SK-N-SH (cell line): ENCODE measurements at regions of chr1 and their contacts with region 1.

Region 1: GRCh38 chr1:202716654-202717053 is 6.4 kb upstream of the SYT2 start:
- DNase-seq: no peak
- H3K4me3 ChIP-seq: no peak overlapping the region
- H3K27ac ChIP-seq: no peak overlapping the region
- H3K4me1 ChIP-seq: peaks cover 0 to 15% of the 10 kb centered on the region in 2 experiments; a peak in 1 of 4 replicates
- H3K27me3 ChIP-seq: no peaks in the 10 kb centered on the region
- CTCF ChIP-seq: no peak
- EP300 ChIP-seq: no peak
- RAD21 ChIP-seq: no peak

Region 2: GRCh38 chr1:201970334-201971159 is 746.1 kb before region 1 on chr1:
- CTCF ChIA-PET with region 1: no interaction called
- POLR2A ChIA-PET with region 1: no interaction called
- DNase-seq: peak; percentile 62
- H3K4me3 ChIP-seq: no peak overlapping the region
- H3K27ac ChIP-seq: no peak overlapping the region
- H3K4me1 ChIP-seq: no peaks in the 10 kb centered on the region; a peak in 1 of 4 replicates
- H3K27me3 ChIP-seq: no peaks in the 10 kb centered on the region
- CTCF ChIP-seq: no peak
- EP300 ChIP-seq: peak in 1 of 2 experiments; percentile 84; a peak in 2 of 4 replicates
- RAD21 ChIP-seq: no peak

Region 3: DNA sequence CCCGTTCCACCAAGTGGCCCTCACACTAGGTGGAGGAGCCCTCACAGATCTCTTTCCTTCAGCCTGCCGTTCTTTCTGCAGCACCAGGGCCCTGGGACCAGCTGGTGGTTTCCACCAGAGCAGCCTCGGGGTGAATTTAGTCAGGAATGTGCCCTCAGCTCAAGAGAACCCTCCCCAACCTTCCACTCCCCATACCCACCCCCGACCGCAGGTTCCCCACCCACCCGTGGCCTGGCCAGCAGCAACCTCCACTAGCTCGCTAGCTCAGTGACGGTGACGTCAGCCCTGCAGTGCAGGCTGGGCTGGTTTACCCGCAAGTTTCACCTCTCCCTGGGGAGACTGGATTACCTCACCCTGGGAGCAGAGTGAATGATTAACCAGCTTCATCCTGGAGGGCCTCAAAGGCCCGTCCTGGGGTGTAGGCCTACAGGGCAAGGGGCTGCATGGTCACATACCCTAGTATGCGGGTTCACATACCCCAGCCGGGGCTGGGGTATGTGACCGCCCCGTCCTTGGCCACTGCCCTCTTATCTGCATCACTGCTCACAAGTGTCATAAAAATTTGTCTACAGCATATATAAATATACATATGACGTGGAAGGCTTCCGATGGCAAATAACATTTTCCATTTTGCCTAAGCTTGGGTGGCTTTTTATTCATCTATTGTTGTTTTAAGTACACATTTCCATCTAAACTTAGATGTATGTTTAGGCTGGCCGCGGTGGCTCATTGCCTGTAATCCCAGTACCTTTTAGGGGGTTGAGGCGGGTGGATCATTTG is 681.8 kb before region 1 on chr1:
- CTCF ChIA-PET with region 1: no interaction called
- POLR2A ChIA-PET with region 1: no interaction called
- DNase-seq: no peak
- H3K4me3 ChIP-seq: no peak overlapping the region
- H3K27ac ChIP-seq: no peak overlapping the region
- H3K4me1 ChIP-seq: no peaks in the 10 kb centered on the region
- H3K27me3 ChIP-seq: no peaks in the 10 kb centered on the region
- CTCF ChIP-seq: no peak
- EP300 ChIP-seq: no peak
- RAD21 ChIP-seq: no peak

Region 4: DNA sequence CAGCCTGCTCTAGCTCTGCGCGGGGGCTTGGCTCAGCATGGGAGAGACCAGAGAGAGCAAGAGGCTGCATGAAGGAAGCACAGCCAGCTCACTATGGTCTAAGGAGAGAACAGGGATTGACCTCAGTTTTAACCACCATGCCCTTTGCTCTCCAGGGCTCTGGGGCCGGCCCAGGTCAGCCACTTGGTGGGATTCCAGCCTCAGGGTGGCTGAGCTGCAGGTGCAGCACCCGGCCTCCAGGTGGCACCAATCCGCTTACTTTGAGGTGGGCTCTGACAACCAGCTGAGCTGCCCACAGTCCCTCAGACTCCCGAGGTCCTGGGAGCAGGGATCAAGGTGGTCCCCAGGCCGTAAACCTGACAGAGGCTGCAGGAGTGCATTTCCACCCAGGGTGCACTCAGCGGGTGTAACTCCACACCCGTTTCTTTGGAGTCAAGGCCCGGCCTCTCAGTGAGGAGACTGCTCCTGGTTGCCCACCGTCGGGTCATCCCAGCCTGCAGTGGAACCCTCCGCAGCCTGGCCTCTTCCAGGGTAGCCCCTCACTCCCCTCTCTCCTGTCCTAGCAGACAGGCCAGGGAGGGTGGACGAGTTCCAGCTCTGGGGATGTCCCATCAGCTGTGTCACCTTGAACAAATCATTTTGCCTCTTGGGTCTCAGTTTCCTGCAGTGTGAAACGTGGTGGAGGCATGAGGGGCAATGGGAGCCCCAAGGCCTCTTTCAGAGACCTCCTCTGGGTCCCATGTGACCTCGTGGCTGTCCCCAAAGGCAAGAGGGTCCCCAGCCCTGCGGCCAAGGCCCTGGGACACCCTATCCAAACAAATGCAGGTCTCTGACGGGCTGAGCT is 523.7 kb before region 1 on chr1:
- CTCF ChIA-PET with region 1: interaction called, 22 read pairs
- POLR2A ChIA-PET with region 1: no interaction called
- DNase-seq: peak; percentile 89
- H3K4me3 ChIP-seq: no peak overlapping the region
- H3K27ac ChIP-seq: no peak overlapping the region
- H3K4me1 ChIP-seq: peaks cover 0 to 10% of the 10 kb centered on the region in 2 experiments; a peak in 1 of 4 replicates
- H3K27me3 ChIP-seq: peaks cover 28% of the 10 kb centered on the region
- CTCF ChIP-seq: peak; percentile 83
- EP300 ChIP-seq: no peak
- RAD21 ChIP-seq: peak; percentile 84

Region 5: GRCh38 chr1:202501281-202501680 is 215.4 kb before region 1 on chr1:
- CTCF ChIA-PET with region 1: interaction called, 30 read pairs
- POLR2A ChIA-PET with region 1: no interaction called
- DNase-seq: peak; percentile 7
- H3K4me3 ChIP-seq: no peak overlapping the region
- H3K27ac ChIP-seq: no peak overlapping the region
- H3K4me1 ChIP-seq: peaks cover 8 to 16% of the 10 kb centered on the region in 2 experiments
- H3K27me3 ChIP-seq: no peaks in the 10 kb centered on the region
- CTCF ChIP-seq: peak; percentile 63
- EP300 ChIP-seq: no peak
- RAD21 ChIP-seq: peak; percentile 82

Region 6: DNA sequence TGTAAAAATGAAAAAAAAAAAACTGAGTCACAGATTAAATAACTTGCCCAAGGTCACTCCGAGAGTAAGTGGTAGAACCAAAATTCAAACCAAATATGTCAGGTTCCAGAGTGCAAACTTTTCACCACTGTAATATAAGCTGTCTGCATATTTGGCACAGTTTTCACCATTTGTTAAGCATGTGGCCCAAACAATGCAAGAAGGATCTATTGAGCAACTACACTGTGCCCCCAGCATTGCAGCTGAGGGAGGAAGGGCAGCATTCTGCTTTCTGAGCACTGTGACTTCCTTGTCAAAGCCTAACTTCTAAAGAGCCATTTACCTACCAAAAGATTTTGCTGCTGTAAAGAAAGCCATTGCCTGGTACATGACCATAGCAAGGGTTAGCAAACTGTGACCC is 139.8 kb before region 1 on chr1:
- CTCF ChIA-PET with region 1: interaction called, 12 read pairs
- POLR2A ChIA-PET with region 1: no interaction called
- DNase-seq: no peak
- H3K4me3 ChIP-seq: no peak overlapping the region
- H3K27ac ChIP-seq: peak overlapping the region; percentile 72 to 96
- H3K4me1 ChIP-seq: peaks cover 52 to 77% of the 10 kb centered on the region in 2 experiments
- H3K27me3 ChIP-seq: no peaks in the 10 kb centered on the region
- CTCF ChIP-seq: no peak
- EP300 ChIP-seq: no peak
- RAD21 ChIP-seq: no peak

Region 7: GRCh38 chr1:202656951-202657646 is 59.6 kb before region 1 on chr1:
- CTCF ChIA-PET with region 1: interaction called, 38 read pairs
- POLR2A ChIA-PET with region 1: no interaction called
- DNase-seq: no peak
- H3K4me3 ChIP-seq: no peak overlapping the region
- H3K27ac ChIP-seq: no peak overlapping the region
- H3K4me1 ChIP-seq: peaks cover 0 to 4% of the 10 kb centered on the region in 2 experiments; a peak in 1 of 4 replicates
- H3K27me3 ChIP-seq: no peaks in the 10 kb centered on the region; the same call in none of the 2 replicates
- CTCF ChIP-seq: peak; percentile 30; the same call in 1 of the 2 replicates
- EP300 ChIP-seq: no peak
- RAD21 ChIP-seq: no peak

Region 8: DNA sequence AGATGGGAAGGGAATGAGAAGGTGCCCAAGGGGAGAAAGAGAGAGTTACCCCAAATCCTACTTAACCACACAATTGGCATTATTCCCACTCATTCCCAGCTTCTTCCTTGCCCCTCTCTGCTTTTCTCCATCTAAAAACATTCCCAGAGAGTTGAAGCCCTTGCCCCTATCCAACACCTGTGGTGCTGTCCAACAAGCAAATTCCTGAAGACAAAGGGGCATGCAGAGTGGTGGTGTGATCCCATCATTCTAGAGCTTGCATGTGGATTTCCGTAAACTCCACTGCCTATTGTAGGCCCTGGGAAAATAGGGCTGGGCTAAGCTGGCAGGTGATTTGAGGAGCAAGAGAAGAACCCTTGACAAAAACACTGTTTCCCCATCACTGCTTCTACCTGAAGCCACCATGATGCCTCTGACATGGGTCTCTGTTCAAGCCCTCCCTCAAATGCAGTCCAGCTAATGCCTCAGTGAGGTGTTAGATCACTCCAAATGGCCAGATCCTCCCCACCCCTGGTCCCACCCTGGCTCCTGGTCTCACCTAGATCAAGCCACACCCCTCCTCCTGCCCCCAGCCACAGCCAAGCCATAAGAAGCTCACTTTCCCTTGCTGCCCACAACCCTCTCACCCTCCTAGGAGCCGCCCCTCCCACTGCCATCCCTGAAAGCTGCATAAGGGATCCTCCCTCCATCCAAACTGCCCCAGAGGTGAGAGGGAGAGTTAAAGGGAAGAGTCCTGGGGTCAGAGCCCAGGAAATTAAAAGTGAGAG is 35.9 kb before region 1 on chr1:
- CTCF ChIA-PET with region 1: interaction called, 10 read pairs
- POLR2A ChIA-PET with region 1: no interaction called
- DNase-seq: no peak
- H3K4me3 ChIP-seq: no peak overlapping the region
- H3K27ac ChIP-seq: no peak overlapping the region
- H3K4me1 ChIP-seq: peaks cover 0 to 4% of the 10 kb centered on the region in 2 experiments; a peak in 1 of 4 replicates
- H3K27me3 ChIP-seq: peaks cover 25% of the 10 kb centered on the region; the same call in 1 of the 2 replicates
- CTCF ChIP-seq: no peak
- EP300 ChIP-seq: no peak
- RAD21 ChIP-seq: no peak

Region 9: DNA sequence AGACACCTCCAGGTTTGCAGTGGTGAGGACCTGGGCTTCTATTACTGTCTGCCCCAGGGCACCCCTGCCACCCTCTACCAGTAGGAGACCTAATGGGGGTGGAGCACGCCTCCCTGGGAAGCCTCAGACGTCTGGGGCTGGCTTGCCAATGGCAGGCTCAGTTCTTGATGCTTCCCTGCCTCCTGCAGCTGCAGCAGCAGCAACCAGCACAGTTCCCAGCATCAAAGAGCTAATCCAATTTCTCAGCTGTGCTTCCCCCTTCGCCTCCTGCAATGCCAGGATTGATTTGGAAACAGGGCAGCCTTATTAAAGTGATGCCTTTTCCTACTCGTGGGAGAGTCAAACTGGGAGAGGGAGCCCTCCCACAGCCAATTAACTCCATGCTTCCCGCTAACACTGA is 14.6 kb before region 1 on chr1:
- CTCF ChIA-PET with region 1: interaction called, 41 read pairs
- POLR2A ChIA-PET with region 1: no interaction called
- DNase-seq: peak; percentile 34
- H3K4me3 ChIP-seq: no peak overlapping the region
- H3K27ac ChIP-seq: no peak overlapping the region
- H3K4me1 ChIP-seq: peaks cover 0 to 9% of the 10 kb centered on the region in 2 experiments; a peak in 1 of 4 replicates
- H3K27me3 ChIP-seq: peaks cover 63% of the 10 kb centered on the region
- CTCF ChIP-seq: no peak
- EP300 ChIP-seq: no peak
- RAD21 ChIP-seq: no peak

Region 10: DNA sequence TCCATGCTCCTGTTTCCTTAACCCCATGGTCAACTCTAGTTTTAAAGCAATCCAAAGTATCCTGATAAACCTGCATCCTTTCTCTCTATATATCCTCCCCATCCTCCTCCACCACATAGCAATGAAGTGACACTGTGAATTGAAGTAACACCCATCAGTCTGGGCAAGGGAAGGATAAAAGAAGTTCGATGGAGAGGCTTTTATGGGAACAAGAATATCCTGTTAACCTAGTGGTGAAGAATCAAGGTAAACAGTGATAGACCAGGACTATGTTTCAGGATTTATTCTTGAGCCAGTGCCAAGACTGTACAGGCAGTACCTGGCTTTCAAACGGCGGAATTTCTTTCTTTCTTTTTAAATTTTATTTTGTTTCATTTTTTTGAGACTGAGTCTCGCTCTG is 154.7 kb after region 1 on chr1:
- CTCF ChIA-PET with region 1: no interaction called
- POLR2A ChIA-PET with region 1: no interaction called
- DNase-seq: no peak
- H3K4me3 ChIP-seq: no peak overlapping the region
- H3K27ac ChIP-seq: no peak overlapping the region
- H3K4me1 ChIP-seq: no peaks in the 10 kb centered on the region
- H3K27me3 ChIP-seq: no peaks in the 10 kb centered on the region
- CTCF ChIP-seq: no peak
- EP300 ChIP-seq: no peak
- RAD21 ChIP-seq: no peak